Heart left ventricle (tissue), 16 donors: ENCODE measurements at regions of chr17 and their contacts with region 1.

Region 1: DNA sequence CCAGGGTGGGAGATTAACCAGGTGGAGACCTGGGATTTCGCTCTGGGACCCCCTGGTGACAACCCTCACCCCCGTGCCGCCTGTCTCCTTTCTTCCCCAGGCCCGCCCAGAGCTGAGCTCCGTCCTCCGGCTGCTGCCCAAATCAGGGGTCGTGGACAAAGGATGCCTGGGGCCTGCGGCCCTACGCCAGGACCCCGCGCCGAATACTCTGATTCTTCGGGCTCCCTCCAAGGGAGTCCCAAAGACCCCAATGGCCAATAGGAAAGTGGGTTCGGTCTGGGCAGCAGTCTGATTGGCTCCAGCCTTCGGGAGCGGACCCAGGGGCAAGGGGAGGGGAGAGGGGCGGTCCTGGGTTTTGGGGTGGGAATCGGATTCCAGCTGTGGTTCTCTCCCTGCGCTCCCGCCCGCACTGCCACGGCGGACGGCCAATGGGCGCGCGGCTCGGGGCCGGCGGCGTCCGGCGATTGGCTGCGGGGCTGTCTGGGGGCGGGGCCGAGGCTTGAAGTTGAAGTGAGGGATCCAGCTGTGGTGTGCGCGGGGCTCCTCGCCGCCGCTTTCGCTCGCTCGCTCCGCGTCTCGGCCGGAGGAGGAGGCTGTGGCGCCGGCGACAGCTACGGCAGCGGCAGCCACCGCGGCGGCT is at the start of gene CACNA1G:
- DNase-seq: peak; percentile 88 to 94 (median 91)
- ATAC-seq: peak; percentile 87 to 95 (median 92)
- H3K4me3 ChIP-seq: peak within 1 kb of the TSS; percentile 28 to 65 (median 56)
- H3K27ac ChIP-seq: no peak within 1 kb of the TSS
- H3K4me1 ChIP-seq: peaks cover 12 to 49% (median 30%) of the 10 kb centered on the region in 12 donors
- H3K27me3 ChIP-seq: peaks cover 27 to 72% (median 49%) of the 10 kb centered on the region in 9 donors
- CTCF ChIP-seq: peak in 1 of 12 donors; percentile 13
- POLR2A ChIP-seq: no peak
- total RNA-seq, gene CACNA1G: 0.02 to 0.48 (median 0.14) TPM in 8 of 9 donors, not detected in the other

Region 2: DNA sequence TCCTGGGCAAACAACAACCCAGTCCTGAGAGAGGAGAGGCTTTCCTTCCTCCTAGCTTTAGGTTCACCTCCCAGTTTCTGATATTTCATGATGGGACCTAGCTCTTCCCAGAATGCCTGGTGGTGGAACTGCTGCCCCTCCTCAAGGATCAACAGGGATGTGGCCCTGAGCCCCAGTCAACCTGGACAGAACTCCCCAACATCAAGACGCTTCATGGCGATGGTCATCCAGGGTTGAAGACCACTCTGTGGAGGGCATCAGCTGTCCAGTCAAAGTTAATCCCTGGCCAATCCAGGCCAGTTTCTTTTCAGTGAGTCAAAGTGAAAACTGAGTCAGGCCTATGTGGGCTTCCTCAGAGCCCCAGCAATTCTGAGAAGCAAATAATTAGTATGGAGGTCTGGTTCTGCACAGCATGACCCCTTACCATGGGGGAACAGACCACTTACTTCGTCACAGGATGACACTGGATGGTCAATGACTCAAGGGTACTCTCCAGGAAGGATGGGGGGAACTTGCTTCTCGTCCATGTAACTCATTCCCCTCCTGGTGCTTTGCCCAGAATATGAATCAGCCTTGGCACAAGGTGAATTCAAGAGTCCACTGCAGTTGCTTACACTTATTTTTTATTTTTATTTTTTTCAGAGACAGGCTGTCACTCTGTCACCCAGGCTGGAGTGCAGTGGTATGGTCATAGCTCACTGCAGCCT is 229.1 kb before region 1 on chr17:
- intact Hi-C with region 1: no loop called
- DNase-seq: no peak
- ATAC-seq: peak in 1 of 4 donors; percentile 23
- H3K4me3 ChIP-seq: no peak overlapping the region
- H3K27ac ChIP-seq: no peak overlapping the region
- H3K4me1 ChIP-seq: peaks cover 0 to 4% (median 0%) of the 10 kb centered on the region in 12 donors
- H3K27me3 ChIP-seq: no peaks in the 10 kb centered on the region
- CTCF ChIP-seq: no peak
- POLR2A ChIP-seq: no peak

Region 3: GRCh38 chr17:50604513-50604912 is 44.2 kb after region 1 on chr17:
- intact Hi-C with region 1: loop called in 2 of 10 experiments (anchors 2 to 5 kb)
- DNase-seq: peak; percentile 77 to 89 (median 80)
- ATAC-seq: peak; percentile 69 to 93 (median 83)
- H3K4me3 ChIP-seq: peak overlapping the region in 2 of 12 donors; percentile 0 to 7
- H3K27ac ChIP-seq: no peak overlapping the region
- H3K4me1 ChIP-seq: peaks cover 3 to 22% (median 18%) of the 10 kb centered on the region in 12 donors
- H3K27me3 ChIP-seq: peaks cover 0 to 14% (median 0%) of the 10 kb centered on the region in 9 donors
- CTCF ChIP-seq: no peak
- POLR2A ChIP-seq: no peak

Region 4: DNA sequence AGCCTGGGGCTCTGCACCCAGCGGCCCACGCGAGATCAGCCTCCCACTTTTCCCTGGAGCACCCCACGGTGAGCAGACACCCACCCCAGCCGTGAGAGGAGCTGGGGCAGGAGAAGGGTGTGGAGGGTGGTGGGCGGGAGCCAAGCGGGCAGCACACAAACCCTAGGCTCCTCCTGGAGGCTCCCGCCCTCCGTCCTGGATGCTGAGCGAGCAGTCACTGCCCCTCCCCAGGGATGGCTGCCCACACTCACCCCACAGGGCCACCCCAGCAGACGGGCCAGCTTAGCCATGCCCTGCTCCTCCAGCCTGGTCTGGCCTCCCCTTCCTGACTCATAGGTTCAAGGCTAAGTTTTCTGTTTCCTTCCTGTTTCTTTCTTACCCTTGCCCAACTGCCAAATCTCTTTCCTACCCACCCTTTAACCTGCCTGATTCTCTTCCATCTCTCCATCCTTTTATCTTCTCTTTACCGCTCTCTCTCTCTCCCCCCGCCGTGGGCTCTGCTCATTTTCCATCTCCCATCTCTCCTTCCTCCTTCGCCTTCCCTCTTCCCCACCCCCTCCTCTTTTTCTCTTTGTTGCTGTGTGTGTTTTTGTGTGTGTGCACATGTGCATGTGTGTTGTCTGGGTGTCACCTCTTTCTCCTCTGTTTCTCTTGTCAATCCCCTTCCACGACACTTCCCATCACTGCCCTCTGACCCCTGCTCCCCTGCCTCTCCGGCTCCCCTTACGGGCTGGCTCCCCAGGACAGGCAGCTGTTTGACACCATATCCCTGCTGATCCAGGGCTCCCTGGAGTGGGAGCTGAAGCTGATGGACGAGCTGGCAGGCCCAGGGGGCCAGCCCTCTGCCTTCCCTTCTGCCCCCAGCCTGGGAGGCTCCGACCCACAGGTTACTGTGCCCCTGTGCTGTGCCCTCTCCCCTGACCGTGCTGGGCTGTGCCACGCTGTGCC is 58.9 kb after region 1 on chr17:
- intact Hi-C with region 1: no loop called
- DNase-seq: no peak
- ATAC-seq: peak in 1 of 4 donors; percentile 11
- H3K4me3 ChIP-seq: no peak overlapping the region
- H3K27ac ChIP-seq: no peak overlapping the region
- H3K4me1 ChIP-seq: peaks cover 0 to 9% (median 0%) of the 10 kb centered on the region in 12 donors
- H3K27me3 ChIP-seq: peaks cover 0 to 4% (median 0%) of the 10 kb centered on the region in 9 donors
- CTCF ChIP-seq: no peak
- POLR2A ChIP-seq: no peak

Region 5: GRCh38 chr17:50681263-50682210 is 121.2 kb after region 1 on chr17:
- intact Hi-C with region 1: loop called in 1 of 10 experiments (anchors 5 kb)
- DNase-seq: peak in 3 of 5 donors; percentile 43 to 54 (median 51)
- ATAC-seq: peak; percentile 29 to 72 (median 66)
- H3K4me3 ChIP-seq: peak overlapping the region in 3 of 12 donors; percentile 0 to 19 (median 17)
- H3K27ac ChIP-seq: peak overlapping the region in 1 of 12 donors; percentile 66
- H3K4me1 ChIP-seq: peaks cover 0 to 9% (median 5%) of the 10 kb centered on the region in 12 donors
- H3K27me3 ChIP-seq: no peaks in the 10 kb centered on the region
- CTCF ChIP-seq: peak; percentile 32 to 65 (median 47)
- POLR2A ChIP-seq: no peak